ENCODE measurements at regions of chr15 and their contacts with region 1.

Region 1: GRCh38 chr15:69475769-69476358 is 23.2 kb downstream of the RPLP1 start:
- DNase-seq: peak; percentile 65
- H3K4me3 ChIP-seq: no peak overlapping the region
- H3K27ac ChIP-seq: no peak overlapping the region
- H3K4me1 ChIP-seq: peaks cover 5% of the 10 kb centered on the region
- H3K27me3 ChIP-seq: no peaks in the 10 kb centered on the region
- CTCF ChIP-seq: peak; percentile 98

Region 2: GRCh38 chr15:69104050-69104750 is 371.7 kb before region 1 on chr15:
- CTCF ChIA-PET with region 1: no interaction called
- dilution Hi-C with region 1: no loop called
- in situ Hi-C with region 1: no loop called
- intact Hi-C with region 1: no loop called
- DNase-seq: no peak
- H3K4me3 ChIP-seq: no peak overlapping the region
- H3K27ac ChIP-seq: no peak overlapping the region
- H3K4me1 ChIP-seq: no peaks in the 10 kb centered on the region
- H3K27me3 ChIP-seq: no peaks in the 10 kb centered on the region
- CTCF ChIP-seq: no peak

Region 3: GRCh38 chr15:69576035-69576526 is 100.2 kb after region 1 on chr15:
- CTCF ChIA-PET with region 1: interaction called, 4 read pairs
- dilution Hi-C with region 1: no loop called
- in situ Hi-C with region 1: no loop called
- intact Hi-C with region 1: loop called (anchors 5 kb)
- DNase-seq: peak; percentile 19
- H3K4me3 ChIP-seq: no peak overlapping the region
- H3K27ac ChIP-seq: no peak overlapping the region
- H3K4me1 ChIP-seq: no peaks in the 10 kb centered on the region
- H3K27me3 ChIP-seq: no peaks in the 10 kb centered on the region
- CTCF ChIP-seq: peak; percentile 64 to 92

Region 4: GRCh38 chr15:69729161-69729748 is 253.4 kb after region 1 on chr15:
- CTCF ChIA-PET with region 1: no interaction called
- dilution Hi-C with region 1: no loop called
- in situ Hi-C with region 1: no loop called
- intact Hi-C with region 1: loop called (anchors 5 kb)
- DNase-seq: no peak
- H3K4me3 ChIP-seq: no peak overlapping the region
- H3K27ac ChIP-seq: no peak overlapping the region
- H3K4me1 ChIP-seq: no peaks in the 10 kb centered on the region
- H3K27me3 ChIP-seq: peaks cover 2% of the 10 kb centered on the region
- CTCF ChIP-seq: peak; percentile 73

Region 5: GRCh38 chr15:70362886-70363285 is 887.0 kb after region 1 on chr15:
- CTCF ChIA-PET with region 1: no interaction called
- dilution Hi-C with region 1: no loop called
- in situ Hi-C with region 1: no loop called
- intact Hi-C with region 1: loop called (anchors 5 kb)
- DNase-seq: no peak
- H3K4me3 ChIP-seq: no peak overlapping the region
- H3K27ac ChIP-seq: no peak overlapping the region
- H3K4me1 ChIP-seq: no peaks in the 10 kb centered on the region
- H3K27me3 ChIP-seq: no peaks in the 10 kb centered on the region
- CTCF ChIP-seq: peak; percentile 31 to 58

Region 6: DNA sequence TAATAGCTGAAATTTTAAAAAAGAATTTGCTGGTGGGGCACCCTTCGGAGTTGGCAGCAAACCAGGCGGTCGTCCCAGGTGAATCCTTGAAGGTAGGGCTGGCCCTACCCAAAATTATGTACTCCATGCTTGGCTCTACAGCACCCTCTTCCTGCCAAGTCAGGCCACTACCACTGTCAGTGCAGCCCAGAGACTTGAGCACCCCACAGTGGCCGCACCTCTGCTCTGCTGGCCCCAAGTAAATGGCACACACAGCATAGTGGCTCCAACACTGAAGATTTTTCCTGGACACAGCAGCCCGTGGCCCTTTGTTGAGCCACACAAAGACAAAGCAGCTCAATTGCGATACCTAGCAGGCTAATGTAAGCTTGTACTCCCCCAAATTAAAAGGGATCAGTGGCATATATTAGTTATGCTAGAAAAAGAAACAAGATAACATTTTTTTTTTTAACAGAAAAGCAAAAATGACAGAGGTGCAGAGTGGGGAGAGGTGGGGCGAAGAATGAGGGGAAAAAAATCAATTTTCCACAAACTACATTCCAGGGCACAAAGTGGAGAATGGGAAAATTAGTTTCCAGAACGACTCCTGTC is 1037.0 kb after region 1 on chr15:
- CTCF ChIA-PET with region 1: no interaction called
- dilution Hi-C with region 1: no loop called
- in situ Hi-C with region 1: no loop called
- intact Hi-C with region 1: loop called (anchors 2 kb)
- DNase-seq: peak; percentile 59
- H3K4me3 ChIP-seq: no peak overlapping the region
- H3K27ac ChIP-seq: no peak overlapping the region
- H3K4me1 ChIP-seq: peaks cover 18% of the 10 kb centered on the region
- H3K27me3 ChIP-seq: peaks cover 9% of the 10 kb centered on the region
- CTCF ChIP-seq: peak; percentile 94 to 96

Region 7: GRCh38 chr15:70815644-70816043 is 1339.8 kb after region 1 on chr15:
- CTCF ChIA-PET with region 1: no interaction called
- dilution Hi-C with region 1: no loop called
- in situ Hi-C with region 1: no loop called
- intact Hi-C with region 1: loop called (anchors 5 kb)
- DNase-seq: no peak
- H3K4me3 ChIP-seq: no peak overlapping the region
- H3K27ac ChIP-seq: no peak overlapping the region
- H3K4me1 ChIP-seq: peaks cover 12% of the 10 kb centered on the region
- H3K27me3 ChIP-seq: no peaks in the 10 kb centered on the region
- CTCF ChIP-seq: no peak

Measured in mammary epithelial cell (primary cell).